ENCODE measurements at regions of chr2 and their contacts with region 1.

Region 1: DNA sequence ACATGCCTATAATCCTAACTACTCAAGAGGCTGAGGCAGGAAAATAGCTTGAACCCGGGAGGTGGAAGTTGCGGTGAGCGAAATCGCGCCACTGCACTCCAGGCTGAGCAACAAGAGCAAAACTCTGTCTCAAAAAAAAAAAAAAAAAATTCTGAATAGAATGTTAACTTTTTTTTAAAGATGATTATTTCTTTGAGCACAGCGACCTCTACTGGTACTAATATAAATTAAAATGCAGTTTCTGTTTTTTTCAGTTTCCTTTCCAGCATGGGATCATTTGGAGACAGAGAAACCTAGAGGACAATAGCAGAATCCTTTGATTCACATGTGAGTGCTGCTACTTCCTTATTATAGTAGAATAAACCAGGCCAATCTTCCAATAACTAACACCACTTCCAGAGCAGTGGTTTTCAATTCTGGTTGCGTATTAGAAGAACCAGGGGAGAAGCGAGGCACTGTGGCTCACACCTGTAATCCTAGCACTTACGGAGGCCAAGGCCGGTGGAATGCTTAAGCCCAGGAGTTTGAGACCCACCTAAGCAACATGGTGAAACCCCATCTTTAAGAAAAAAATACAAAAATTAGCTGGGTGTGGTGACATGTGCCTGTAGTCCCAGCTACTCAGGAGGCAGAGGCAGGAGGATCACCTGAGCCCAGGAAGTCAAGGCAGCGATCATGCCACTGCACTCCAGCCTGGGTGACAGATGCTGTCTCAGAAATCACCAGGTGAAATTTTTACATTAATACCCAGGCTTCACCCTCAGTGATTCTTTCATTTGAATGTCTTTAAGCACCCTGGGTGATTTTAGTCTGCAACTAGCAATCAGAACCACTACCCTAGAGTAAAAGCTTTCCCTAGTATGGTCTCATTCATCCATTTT is 10.1 kb downstream of the SRSF7 start:
- DNase-seq: no peak
- H3K4me3 ChIP-seq: peak overlapping the region; percentile 8
- H3K27ac ChIP-seq: peak overlapping the region; percentile 88
- H3K4me1 ChIP-seq: peaks cover 18% of the 10 kb centered on the region
- H3K27me3 ChIP-seq: no peaks in the 10 kb centered on the region
- CTCF ChIP-seq: peak; percentile 85

Region 2: DNA sequence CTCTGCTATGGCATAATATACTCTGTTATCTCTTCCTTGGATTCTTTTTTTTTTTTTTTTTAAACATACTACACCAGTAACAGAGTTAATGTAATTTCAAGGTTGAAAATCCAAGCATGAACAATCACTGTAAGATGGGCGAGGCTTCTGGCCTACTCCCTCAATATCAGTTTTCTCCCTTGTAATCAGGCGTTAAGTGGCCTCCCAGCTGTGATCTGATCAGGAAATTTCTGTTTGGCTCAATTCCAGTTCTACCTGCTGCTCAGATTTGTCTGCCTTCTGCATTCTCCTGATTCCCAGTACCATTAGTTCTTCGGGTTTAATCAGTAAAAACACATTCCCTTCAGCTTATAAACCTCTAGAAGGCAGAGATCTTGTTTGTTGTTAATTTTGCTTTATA is 1435.1 kb before region 1 on chr2:
- intact Hi-C with region 1: no loop called
- DNase-seq: peak; percentile 50
- H3K4me3 ChIP-seq: no peak overlapping the region
- H3K27ac ChIP-seq: no peak overlapping the region
- H3K4me1 ChIP-seq: no peaks in the 10 kb centered on the region
- H3K27me3 ChIP-seq: no peaks in the 10 kb centered on the region
- CTCF ChIP-seq: no peak

Region 3: GRCh38 chr2:38581193-38582147 is 159.6 kb before region 1 on chr2:
- intact Hi-C with region 1: loop called (anchors 5 kb)
- DNase-seq: peak; percentile 43
- H3K4me3 ChIP-seq: no peak overlapping the region
- H3K27ac ChIP-seq: no peak overlapping the region
- H3K4me1 ChIP-seq: peaks cover 4% of the 10 kb centered on the region
- H3K27me3 ChIP-seq: no peaks in the 10 kb centered on the region
- CTCF ChIP-seq: peak; percentile 80